ENCODE measurements at regions of chr3 and their contacts with region 1.

Region 1: DNA sequence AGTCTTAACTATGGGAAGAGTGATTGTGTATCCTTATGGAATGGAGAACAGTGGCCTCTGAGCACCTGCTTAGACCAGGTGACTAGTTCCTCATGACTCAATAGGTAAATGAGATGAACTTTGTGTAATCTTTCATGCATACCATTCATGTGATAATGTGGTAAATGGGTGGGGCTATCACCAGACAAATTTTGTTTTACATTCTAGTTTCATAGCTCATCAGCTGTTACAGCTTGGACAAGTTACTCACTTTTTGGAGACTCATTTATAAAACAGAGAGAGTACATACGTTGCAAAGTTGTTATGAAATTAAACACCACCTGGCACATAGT is 103.7 kb upstream of the TGFBR2 start:
- DNase-seq: no peak
- H3K4me3 Mint-ChIP-seq: no peak overlapping the region
- H3K27ac Mint-ChIP-seq: no peak overlapping the region
- H3K4me1 Mint-ChIP-seq: peaks cover 35% of the 10 kb centered on the region
- H3K27me3 Mint-ChIP-seq: no peaks in the 10 kb centered on the region

Region 2: DNA sequence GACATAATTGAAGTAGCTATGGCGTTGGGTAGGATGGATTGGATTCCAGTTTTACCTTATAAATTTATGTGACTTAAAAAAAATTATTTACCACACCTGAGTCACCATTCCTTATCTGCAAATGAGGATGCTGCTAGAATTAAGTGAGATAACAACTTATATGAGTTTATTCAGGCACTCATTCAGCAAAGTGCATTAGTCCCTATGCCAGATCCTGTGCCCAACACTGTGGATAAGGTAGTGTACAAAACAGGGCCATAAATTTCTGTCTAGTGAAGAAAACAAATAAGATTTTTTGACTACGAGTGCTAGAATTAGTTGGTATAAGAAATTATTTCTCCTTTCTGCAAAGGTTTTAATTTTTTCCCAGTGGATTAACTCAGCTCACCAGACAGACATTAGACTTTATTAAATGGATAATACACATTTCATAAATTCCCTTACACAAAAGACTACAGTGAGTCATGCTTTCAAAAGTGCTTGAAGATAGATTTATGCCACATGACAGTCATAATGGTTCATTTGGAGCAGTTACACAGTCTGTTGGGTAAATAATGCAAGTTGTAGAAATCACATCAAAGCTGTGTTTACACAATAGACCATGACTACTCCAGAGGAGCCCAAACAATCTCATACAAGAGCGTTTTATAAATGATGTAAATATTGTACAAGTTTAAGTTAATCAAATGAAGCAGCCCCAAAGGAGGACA is 26.2 kb before region 1 on chr3:
- intact Hi-C with region 1: loop called (anchors 2 kb)
- DNase-seq: no peak
- H3K4me3 Mint-ChIP-seq: no peak overlapping the region
- H3K27ac Mint-ChIP-seq: no peak overlapping the region
- H3K4me1 Mint-ChIP-seq: peaks cover 51% of the 10 kb centered on the region
- H3K27me3 Mint-ChIP-seq: no peaks in the 10 kb centered on the region

Region 3: DNA sequence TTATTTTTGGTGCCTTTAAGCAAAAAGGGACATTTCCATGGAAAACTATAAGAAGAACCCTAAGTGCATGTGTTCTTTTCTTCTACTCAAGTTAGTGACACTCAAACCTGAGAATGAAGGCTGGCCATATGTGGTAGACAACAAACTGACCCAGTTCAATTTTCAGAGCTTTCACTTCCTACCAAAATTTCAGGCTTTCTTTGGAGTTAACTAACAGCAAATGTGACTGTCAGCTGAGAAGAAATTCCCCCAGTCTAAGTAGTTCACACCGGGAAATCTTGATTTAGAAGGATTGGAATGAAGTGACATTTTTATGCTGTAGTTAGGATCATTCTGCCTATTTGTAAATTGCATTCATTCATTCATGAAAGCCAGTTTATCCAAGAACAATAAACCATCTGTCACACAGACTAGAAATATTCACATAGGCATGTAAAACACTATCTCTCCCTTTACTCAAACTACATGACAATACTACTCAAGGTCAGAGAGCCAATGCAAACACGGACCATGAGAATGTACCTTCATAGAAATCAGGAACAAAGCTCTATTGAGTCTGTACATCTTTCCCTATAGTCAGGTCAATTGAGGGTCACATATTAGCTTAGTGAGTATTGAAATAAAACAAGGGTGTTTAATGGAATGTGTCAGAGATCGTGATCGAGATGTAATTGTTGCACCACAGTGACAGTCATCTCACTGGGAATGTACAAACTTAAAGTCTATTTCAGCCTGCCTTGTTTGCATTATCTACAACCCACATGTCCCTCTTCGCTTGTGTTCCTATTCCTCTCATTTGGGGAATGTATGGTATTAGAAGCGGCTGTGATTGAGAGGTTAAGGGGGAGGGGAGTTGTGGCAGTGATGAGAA is 10.2 kb before region 1 on chr3:
- intact Hi-C with region 1: no loop called
- DNase-seq: no peak
- H3K4me3 Mint-ChIP-seq: no peak overlapping the region
- H3K27ac Mint-ChIP-seq: no peak overlapping the region
- H3K4me1 Mint-ChIP-seq: peaks cover 18% of the 10 kb centered on the region
- H3K27me3 Mint-ChIP-seq: peaks cover 2% of the 10 kb centered on the region

Region 4: DNA sequence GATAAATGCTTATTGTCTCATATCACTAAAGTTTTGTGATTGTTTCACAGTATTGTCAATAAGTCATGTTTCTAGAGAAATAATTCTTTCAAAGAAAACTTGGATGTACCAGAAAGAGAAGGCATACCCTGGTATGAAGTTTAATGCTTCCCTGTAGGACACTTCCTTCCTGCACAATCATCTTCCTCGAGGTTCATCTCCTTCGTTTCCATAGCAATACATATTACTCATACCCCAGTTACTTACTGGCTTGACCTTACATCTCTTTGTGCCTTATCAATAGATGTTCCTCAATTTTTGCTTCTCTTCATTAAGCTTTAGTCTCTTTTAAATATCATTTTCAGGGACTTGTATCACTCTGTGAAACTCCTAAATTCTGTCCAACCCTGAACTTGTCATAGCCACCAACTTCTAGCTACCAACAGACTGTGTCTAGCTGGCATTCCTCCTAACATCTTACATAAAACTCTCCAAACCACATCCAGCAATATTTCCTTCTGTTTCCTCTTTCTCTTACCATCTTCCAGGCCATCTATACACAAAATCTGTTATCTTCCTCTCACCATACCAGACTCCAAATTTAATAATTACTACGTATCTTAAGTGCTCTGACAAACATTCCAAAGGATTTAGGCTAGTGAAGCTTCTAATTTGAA is 257.5 kb after region 1 on chr3:
- intact Hi-C with region 1: no loop called
- DNase-seq: no peak
- H3K4me3 Mint-ChIP-seq: no peak overlapping the region
- H3K27ac Mint-ChIP-seq: no peak overlapping the region
- H3K4me1 Mint-ChIP-seq: no peaks in the 10 kb centered on the region
- H3K27me3 Mint-ChIP-seq: peaks cover 8% of the 10 kb centered on the region

Region 5: GRCh38 chr3:30779686-30780287 is 277.1 kb after region 1 on chr3:
- intact Hi-C with region 1: no loop called
- DNase-seq: no peak
- H3K4me3 Mint-ChIP-seq: no peak overlapping the region
- H3K27ac Mint-ChIP-seq: no peak overlapping the region
- H3K4me1 Mint-ChIP-seq: no peaks in the 10 kb centered on the region
- H3K27me3 Mint-ChIP-seq: peaks cover 6% of the 10 kb centered on the region

Measured in activated T-helper 1 cell treated with anti-CD3 and anti-CD28 coated beads, Interleukin-12 subunit alpha, Interleukin-12 subunit beta, Interleukin-2, Interleukin-4 antibody, amounts not matched to agents 30 ng/mL and 10 ng/mL and 1 ng/mL, durations not matched to agents 14 hours and 24 hours and 36 hours (primary cell).